ENCODE measurements at regions of chr1 and their contacts with region 1.

Region 1: DNA sequence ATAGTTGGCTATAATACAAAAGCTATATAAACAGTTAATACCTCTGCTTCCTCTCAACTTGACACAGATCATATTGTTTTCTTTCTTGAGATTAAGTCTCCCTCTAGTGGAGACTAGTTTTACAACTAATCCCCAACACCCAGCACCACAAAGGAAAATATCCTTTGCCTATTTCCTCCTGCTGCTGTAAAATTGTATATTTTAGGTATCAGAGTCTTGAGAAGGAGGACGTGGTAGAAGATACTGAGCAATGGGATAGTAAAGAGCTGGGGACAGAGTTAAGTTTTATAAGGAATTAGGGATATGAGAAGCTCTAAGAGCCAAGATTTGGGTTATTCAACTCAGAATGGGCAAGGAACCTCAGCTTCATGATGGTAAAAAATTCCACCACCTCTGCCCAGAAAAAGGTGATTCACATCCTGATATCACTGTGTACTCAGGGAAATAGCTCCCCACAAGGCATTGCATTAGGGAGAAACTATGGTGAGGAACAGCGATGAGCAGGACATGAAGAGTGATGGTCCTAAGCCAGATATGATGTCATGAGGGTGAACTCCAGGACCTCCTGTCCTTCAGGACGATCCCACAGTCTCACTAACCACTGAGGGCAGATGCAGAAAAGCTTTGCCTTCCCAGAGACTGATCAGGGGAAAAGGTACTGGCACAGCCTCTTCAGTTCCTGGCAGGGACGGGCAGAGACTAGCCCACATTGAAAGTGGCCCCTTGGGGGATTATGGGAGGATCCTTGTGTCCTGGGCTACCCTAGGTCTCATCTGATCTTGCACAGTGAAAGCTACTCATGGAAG is 14.7 kb upstream of the CFAP126 start:
- DNase-seq: peak in 1 of 2 experiments; percentile 78
- H3K4me3 ChIP-seq: peak overlapping the region; percentile 28; the same call in 1 of the 2 replicates
- H3K27ac ChIP-seq: peak overlapping the region; percentile 72
- H3K4me1 ChIP-seq: peaks cover 23% of the 10 kb centered on the region
- H3K27me3 ChIP-seq: no peaks in the 10 kb centered on the region
- CTCF ChIP-seq: peak; percentile 83

Region 2: GRCh38 chr1:161192476-161193465 is 189.6 kb before region 1 on chr1:
- CTCF ChIA-PET with region 1: no interaction called
- POLR2A ChIA-PET with region 1: no interaction called
- intact Hi-C with region 1: loop called (anchors 1 kb)
- DNase-seq: peak; percentile 38 to 52
- H3K4me3 ChIP-seq: no peak overlapping the region
- H3K27ac ChIP-seq: no peak overlapping the region
- H3K4me1 ChIP-seq: no peaks in the 10 kb centered on the region
- H3K27me3 ChIP-seq: no peaks in the 10 kb centered on the region
- CTCF ChIP-seq: peak; percentile 86

Region 3: GRCh38 chr1:161209790-161210409 is 172.5 kb before region 1 on chr1:
- CTCF ChIA-PET with region 1: no interaction called
- POLR2A ChIA-PET with region 1: interaction called, 4 read pairs
- intact Hi-C with region 1: loop called (anchors 5 kb)
- DNase-seq: peak; percentile 43 to 79
- H3K4me3 ChIP-seq: no peak overlapping the region
- H3K27ac ChIP-seq: no peak overlapping the region
- H3K4me1 ChIP-seq: no peaks in the 10 kb centered on the region
- H3K27me3 ChIP-seq: no peaks in the 10 kb centered on the region
- CTCF ChIP-seq: peak; percentile 94

Region 4: GRCh38 chr1:161225534-161226319 is 156.7 kb before region 1 on chr1 and contains the start of gene TOMM40L:
- CTCF ChIA-PET with region 1: interaction called, 5 read pairs
- POLR2A ChIA-PET with region 1: no interaction called
- intact Hi-C with region 1: loop called (anchors 2 kb)
- DNase-seq: peak; percentile 84 to 95
- H3K4me3 ChIP-seq: peak within 1 kb of the TSS; percentile 83
- H3K27ac ChIP-seq: no peak within 1 kb of the TSS
- H3K4me1 ChIP-seq: peaks cover 16% of the 10 kb centered on the region
- H3K27me3 ChIP-seq: no peaks in the 10 kb centered on the region
- CTCF ChIP-seq: peak; percentile 52
- total RNA-seq, gene TOMM40L: 4.3 and 6.7 TPM in 2 replicates

Region 5: DNA sequence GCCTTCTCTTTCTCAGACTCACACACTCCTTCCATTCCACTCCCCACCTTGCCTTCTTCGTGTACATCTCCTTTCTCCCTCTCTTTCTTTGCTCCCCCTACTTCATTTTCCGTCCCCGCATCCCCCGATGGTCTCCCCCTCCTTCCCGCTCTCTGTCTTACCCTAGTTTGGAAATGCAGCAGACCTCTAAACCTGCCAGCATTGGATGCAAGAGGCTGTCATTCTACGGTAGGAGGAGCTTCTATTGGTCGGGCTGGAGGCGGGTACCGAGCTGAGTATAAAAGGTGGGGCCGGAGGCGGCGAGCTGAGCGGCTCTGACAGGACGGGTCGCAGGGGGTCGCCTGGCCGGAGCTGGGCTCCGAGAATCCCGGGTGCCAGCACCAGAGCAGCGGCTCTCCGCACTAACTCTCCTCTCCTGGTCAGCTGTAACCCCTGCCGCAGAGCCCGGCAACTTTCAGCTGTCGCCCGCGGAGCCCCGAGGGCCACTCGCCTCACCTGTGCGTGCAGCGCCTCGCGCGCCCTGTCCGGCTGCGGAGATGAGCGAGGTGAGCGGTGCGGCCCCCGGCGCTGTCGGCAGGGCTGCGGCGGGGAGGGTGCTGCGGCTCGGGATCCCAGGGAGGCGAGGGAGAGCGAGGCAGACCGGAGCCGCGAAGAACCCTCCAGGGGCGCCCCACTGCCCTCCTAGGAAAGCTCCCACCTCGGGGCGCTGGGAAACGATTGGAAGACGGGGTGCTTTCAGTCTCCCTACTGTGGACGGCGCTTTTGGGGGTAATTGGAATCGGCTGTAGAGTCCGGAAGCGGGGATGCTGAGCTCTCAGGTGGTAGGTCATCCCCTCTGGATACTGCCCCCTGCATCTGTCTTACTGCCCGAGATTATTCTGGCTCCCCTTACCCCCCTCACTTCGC is 123.7 kb before region 1 on chr1 and contains the start of gene PCP4L1:
- CTCF ChIA-PET with region 1: no interaction called
- POLR2A ChIA-PET with region 1: no interaction called
- intact Hi-C with region 1: no loop called
- DNase-seq: peak in 1 of 2 experiments; percentile 16
- H3K4me3 ChIP-seq: peak within 1 kb of the TSS; percentile 51
- H3K27ac ChIP-seq: no peak within 1 kb of the TSS
- H3K4me1 ChIP-seq: peaks cover 29% of the 10 kb centered on the region
- H3K27me3 ChIP-seq: peaks cover 19% of the 10 kb centered on the region
- CTCF ChIP-seq: no peak
- total RNA-seq, gene PCP4L1: not detected in 2 replicates

Region 6: DNA sequence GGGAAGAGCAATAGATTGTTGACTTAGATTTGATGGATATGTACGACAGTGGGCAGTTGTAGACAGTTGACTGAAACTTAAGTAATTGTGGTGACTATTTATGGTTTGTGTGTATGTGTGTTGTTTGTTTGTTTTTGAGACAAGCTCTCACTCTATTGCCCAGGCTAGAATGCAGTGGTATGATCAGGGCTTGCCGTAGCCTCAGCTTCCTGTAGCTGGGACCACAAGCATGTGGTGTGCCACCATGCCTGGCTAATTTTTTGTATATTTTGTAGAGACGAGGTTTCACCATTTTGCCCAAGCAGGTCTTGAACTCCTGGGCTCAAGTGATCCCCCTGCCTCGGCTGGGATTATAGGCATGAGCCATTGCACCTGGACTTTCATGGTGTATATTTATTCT is 58.4 kb before region 1 on chr1:
- CTCF ChIA-PET with region 1: no interaction called
- POLR2A ChIA-PET with region 1: no interaction called
- intact Hi-C with region 1: no loop called
- DNase-seq: no peak
- H3K4me3 ChIP-seq: no peak overlapping the region
- H3K27ac ChIP-seq: no peak overlapping the region
- H3K4me1 ChIP-seq: no peaks in the 10 kb centered on the region
- H3K27me3 ChIP-seq: no peaks in the 10 kb centered on the region
- CTCF ChIP-seq: no peak

Region 7: DNA sequence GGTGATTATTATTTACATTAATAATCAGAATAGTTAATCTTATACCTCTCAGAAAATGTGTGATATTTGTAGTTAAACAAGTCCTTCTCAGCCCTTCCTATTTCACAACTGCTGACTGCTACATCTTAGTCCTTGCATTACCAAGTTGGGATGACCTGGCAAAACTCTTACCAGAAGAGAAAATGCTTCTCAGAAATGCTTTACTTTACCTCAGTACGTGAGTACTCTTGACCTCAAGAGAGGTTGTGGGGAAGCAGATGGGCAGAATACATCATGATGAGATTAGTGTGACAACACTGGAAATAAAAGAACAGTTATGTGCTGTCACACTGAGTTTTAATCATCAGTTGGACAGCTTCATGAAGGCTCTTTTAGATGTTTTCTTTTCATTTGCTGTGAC is 30.9 kb before region 1 on chr1:
- CTCF ChIA-PET with region 1: no interaction called
- POLR2A ChIA-PET with region 1: no interaction called
- intact Hi-C with region 1: no loop called
- DNase-seq: no peak
- H3K4me3 ChIP-seq: no peak overlapping the region
- H3K27ac ChIP-seq: no peak overlapping the region
- H3K4me1 ChIP-seq: no peaks in the 10 kb centered on the region
- H3K27me3 ChIP-seq: no peaks in the 10 kb centered on the region
- CTCF ChIP-seq: no peak

Region 8: GRCh38 chr1:162062542-162063015 is 680.2 kb after region 1 on chr1:
- CTCF ChIA-PET with region 1: no interaction called
- POLR2A ChIA-PET with region 1: interaction called, 15 read pairs
- intact Hi-C with region 1: no loop called
- DNase-seq: no peak
- H3K4me3 ChIP-seq: no peak overlapping the region
- H3K27ac ChIP-seq: no peak overlapping the region
- H3K4me1 ChIP-seq: peaks cover 5% of the 10 kb centered on the region; the same call in 1 of the 2 replicates
- H3K27me3 ChIP-seq: no peaks in the 10 kb centered on the region
- CTCF ChIP-seq: no peak

Measured in PC-9 (cell line).